PC-9 (cell line): ENCODE measurements at regions of chr7 and their contacts with region 1.

Region 1: GRCh38 chr7:12490117-12490688 is 80.3 kb upstream of the SCIN start:
- DNase-seq: peak in 1 of 2 experiments; percentile 53
- H3K4me3 ChIP-seq: no peak overlapping the region
- H3K27ac ChIP-seq: no peak overlapping the region
- H3K4me1 ChIP-seq: no peaks in the 10 kb centered on the region
- H3K27me3 ChIP-seq: no peaks in the 10 kb centered on the region
- CTCF ChIP-seq: peak; percentile 89

Region 2: GRCh38 chr7:11427686-11428273 is 1062.4 kb before region 1 on chr7:
- CTCF ChIA-PET with region 1: no interaction called
- POLR2A ChIA-PET with region 1: no interaction called
- intact Hi-C with region 1: loop called (anchors 1 kb)
- DNase-seq: peak in 1 of 2 experiments; percentile 54
- H3K4me3 ChIP-seq: no peak overlapping the region
- H3K27ac ChIP-seq: no peak overlapping the region
- H3K4me1 ChIP-seq: no peaks in the 10 kb centered on the region
- H3K27me3 ChIP-seq: no peaks in the 10 kb centered on the region
- CTCF ChIP-seq: peak; percentile 90

Region 3: DNA sequence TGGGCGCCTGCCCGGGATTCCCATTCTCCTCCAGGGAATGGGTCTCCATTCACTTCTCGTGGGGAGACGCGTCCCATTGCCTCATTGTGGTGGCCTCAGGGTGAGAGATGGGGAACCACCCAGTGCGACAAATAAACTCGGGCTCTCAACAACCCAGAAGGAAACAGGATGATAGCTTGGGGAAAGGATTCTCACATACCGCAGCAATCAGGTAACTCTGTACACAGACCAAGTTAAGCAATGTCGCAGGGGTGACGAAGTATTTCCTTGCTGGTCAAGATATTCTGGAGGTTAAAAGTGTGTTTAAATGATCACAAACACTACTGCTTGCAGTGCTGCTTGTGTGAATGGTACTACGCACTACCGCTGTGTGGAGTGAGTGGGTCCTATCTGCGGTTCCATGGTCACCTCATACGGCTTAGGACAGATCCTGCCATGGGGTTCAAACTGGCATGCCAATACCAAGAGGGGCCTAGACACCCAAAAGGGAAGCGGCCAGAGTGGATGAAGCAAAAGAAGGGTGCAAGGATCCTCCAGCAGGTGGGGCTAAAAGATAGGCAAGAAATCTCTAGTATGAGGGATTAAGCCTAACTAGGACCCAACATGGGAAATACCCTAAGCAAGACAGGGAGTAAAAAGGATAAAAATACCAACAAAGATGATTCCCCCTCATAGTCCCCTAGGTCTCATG is 422.9 kb before region 1 on chr7:
- CTCF ChIA-PET with region 1: no interaction called
- POLR2A ChIA-PET with region 1: no interaction called
- intact Hi-C with region 1: loop called (anchors 2 kb)
- DNase-seq: peak in 1 of 2 experiments; percentile 72
- H3K4me3 ChIP-seq: no peak overlapping the region
- H3K27ac ChIP-seq: peak overlapping the region; percentile 99
- H3K4me1 ChIP-seq: peaks cover 23% of the 10 kb centered on the region
- H3K27me3 ChIP-seq: no peaks in the 10 kb centered on the region
- CTCF ChIP-seq: peak; percentile 61

Region 4: GRCh38 chr7:12389089-12389700 is 101.0 kb before region 1 on chr7:
- CTCF ChIA-PET with region 1: interaction called, 7 read pairs
- POLR2A ChIA-PET with region 1: no interaction called
- intact Hi-C with region 1: loop called (anchors 1 kb)
- DNase-seq: peak; percentile 50 to 52
- H3K4me3 ChIP-seq: no peak overlapping the region
- H3K27ac ChIP-seq: no peak overlapping the region
- H3K4me1 ChIP-seq: no peaks in the 10 kb centered on the region
- H3K27me3 ChIP-seq: no peaks in the 10 kb centered on the region
- CTCF ChIP-seq: peak; percentile 90

Region 5: GRCh38 chr7:12458520-12459131 is 31.6 kb before region 1 on chr7:
- CTCF ChIA-PET with region 1: interaction called, 22 read pairs
- POLR2A ChIA-PET with region 1: no interaction called
- intact Hi-C with region 1: loop called (anchors 1 kb)
- DNase-seq: peak; percentile 17 to 39
- H3K4me3 ChIP-seq: no peak overlapping the region
- H3K27ac ChIP-seq: no peak overlapping the region
- H3K4me1 ChIP-seq: peaks cover 4% of the 10 kb centered on the region; the same call in 1 of the 2 replicates
- H3K27me3 ChIP-seq: no peaks in the 10 kb centered on the region
- CTCF ChIP-seq: peak; percentile 94